ENCODE measurements at regions of chr7 and their contacts with region 1.

Region 1: GRCh38 chr7:102464577-102465280 is at the starts of genes ALKBH4 and LRWD1:
- DNase-seq: peak; percentile 98
- ATAC-seq: peak; percentile 94
- H3K4me3 Mint-ChIP-seq: peak within 1 kb of the TSS; percentile 95
- H3K27ac Mint-ChIP-seq: peak within 1 kb of the TSS; percentile 73
- H3K4me1 Mint-ChIP-seq: peaks cover 30% of the 10 kb centered on the region
- H3K27me3 Mint-ChIP-seq: no peaks in the 10 kb centered on the region
- total RNA-seq, gene ALKBH4: 6.1 to 9.1 TPM
- total RNA-seq, gene LRWD1: 13.6 to 14.4 TPM

Region 2: GRCh38 chr7:101321491-101322401 is 1143.0 kb before region 1 on chr7 and contains the start of gene IFT22:
- CTCF ChIA-PET with region 1: no interaction called
- POLR2A ChIA-PET with region 1: no interaction called
- intact Hi-C with region 1: loop called in 1 of 2 experiments (anchors 10 kb)
- DNase-seq: peak; percentile 93
- ATAC-seq: peak; percentile 97
- H3K4me3 Mint-ChIP-seq: peak within 1 kb of the TSS; percentile 82
- H3K27ac Mint-ChIP-seq: peak within 1 kb of the TSS; percentile 89
- H3K4me1 Mint-ChIP-seq: peaks cover 8% of the 10 kb centered on the region
- H3K27me3 Mint-ChIP-seq: no peaks in the 10 kb centered on the region
- total RNA-seq, gene IFT22: 6.0 to 6.7 TPM

Region 3: DNA sequence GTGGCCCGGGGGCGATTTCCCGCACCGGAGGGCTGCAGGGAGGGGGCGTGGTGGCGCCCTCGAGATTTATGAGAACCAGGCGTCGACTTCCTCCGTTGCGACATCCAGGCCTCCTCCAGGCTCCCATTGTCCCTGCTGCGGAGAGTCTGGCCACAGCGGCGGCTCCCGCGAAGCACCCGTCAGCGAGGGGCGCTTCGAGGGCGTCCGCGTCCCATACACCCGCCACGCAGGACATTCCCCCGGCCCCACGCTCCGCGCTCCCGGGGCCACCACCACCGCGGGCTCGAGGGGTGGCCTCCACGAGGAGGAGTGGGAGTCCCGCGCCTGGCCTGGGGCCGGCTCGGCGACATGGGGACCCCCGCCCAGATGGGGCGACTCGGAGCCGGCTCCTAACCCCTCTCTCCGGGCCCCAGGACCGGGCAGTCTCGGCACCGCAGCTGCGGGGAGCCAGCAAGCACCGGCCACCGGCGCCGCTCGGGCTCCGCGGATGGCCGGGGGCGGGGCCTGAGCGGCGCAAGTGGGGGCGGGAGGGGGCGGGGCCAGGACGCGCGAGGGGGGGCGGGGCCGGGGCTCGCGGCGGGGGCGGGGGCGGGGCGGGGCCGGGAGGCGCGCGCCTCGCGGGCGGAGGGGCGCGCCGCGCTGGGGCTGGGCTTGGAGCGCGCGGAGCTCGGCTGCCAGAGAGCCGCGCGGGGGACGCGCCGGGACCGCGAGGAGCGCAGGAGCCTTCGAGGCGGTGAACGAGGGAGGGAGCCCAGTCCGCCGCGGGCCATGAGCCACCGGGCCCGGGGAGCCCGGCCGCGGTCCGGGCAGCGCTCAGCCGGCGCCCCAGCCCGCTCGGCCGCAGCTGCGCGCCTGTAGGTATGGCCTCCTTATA is 178.3 kb before region 1 on chr7 and contains the start of gene SH2B2:
- CTCF ChIA-PET with region 1: no interaction called
- POLR2A ChIA-PET with region 1: no interaction called
- intact Hi-C with region 1: loop called (anchors 2 to 10 kb)
- DNase-seq: peak; percentile 63
- ATAC-seq: peak; percentile 34
- H3K4me3 Mint-ChIP-seq: peak within 1 kb of the TSS; percentile 56
- H3K27ac Mint-ChIP-seq: no peak within 1 kb of the TSS
- H3K4me1 Mint-ChIP-seq: peaks cover 34% of the 10 kb centered on the region
- H3K27me3 Mint-ChIP-seq: peaks cover 12% of the 10 kb centered on the region
- total RNA-seq, gene SH2B2: 2.7 to 3.2 TPM

Region 4: DNA sequence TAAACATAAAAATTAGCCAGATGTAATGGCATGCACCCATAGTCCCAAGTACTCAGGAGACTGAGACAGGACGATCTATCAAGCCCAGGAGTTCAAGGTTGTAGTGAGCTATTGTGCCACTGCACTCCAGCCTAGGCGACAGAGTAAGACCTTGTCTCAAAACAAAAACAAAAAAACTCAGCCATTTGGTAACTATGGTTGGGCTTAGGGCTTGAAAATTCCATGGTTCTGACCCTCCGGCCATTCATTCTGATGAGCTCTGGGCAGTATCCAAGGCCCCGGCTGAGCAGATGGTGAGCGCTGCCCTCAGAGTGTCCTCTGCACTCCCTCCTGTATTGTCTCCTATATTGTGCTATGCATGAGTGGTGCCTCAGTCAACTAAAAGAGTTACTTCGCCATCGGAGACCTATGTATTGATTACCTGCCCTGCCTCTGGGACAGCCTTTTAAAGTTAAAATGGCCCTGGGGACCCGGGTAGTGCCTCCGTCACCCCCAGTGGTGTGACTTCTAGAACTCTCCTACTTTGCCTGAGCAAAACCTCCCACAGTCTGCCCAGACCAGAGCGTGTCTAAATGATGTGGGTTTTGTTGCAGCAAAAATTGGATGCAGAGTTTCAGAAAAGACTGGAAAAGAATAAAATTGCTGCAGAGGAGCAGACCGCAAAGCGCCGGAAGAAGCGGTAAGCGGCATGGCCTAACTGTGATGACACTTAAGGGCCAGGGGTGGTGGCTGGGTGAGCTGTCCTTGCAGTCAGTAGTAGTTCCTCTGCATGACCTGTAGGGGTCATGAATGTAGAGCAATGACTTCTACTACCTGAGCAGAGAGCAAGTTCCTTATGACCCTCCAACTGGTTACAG is 60.5 kb before region 1 on chr7:
- CTCF ChIA-PET with region 1: interaction called, 5 read pairs
- POLR2A ChIA-PET with region 1: no interaction called
- intact Hi-C with region 1: loop called (anchors 2 kb)
- DNase-seq: peak; percentile 63
- ATAC-seq: peak; percentile 98
- H3K4me3 Mint-ChIP-seq: no peak overlapping the region
- H3K27ac Mint-ChIP-seq: peak overlapping the region; percentile 8
- H3K4me1 Mint-ChIP-seq: peaks cover 3% of the 10 kb centered on the region
- H3K27me3 Mint-ChIP-seq: no peaks in the 10 kb centered on the region

Region 5: DNA sequence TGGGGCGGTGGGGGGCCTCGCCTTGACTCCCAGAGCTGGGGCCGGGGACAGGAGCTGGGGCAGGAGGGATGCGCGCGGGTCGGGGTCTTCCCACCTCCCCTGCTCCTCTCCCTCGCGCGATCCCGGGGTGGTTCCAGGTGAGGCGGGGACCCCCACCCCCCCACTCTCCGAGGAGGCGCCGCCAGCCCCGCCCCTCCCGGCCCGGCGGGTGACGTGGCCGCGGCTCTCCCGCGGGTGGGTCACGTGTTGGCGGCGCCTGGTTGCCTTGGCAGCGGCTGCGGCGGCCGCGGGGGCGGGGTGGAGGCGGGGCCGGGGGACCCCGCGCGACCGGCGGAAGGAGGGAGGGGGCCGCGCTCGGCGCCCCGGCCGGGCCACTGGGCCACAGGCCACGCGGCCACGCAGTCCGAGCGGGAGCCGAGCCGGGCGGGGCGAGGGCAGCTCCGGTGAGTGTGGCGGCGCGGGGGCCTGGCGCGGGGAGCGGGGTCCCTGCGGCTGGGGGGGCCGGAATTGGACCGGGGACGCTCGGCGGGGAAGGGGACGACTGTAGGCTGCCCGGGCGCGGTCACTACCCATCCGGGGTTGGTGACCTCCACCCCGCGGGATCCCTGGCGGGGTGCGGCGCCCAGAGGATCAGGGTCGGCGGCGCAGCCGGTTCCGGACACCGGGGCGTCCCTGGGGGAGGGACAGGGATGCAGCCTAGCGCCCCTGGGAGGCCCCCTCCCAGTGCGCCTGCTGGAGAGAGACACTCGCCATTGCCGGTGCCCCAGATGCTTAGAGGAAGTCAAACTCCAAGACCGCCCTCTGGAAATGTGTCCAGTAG is 31.3 kb before region 1 on chr7 and contains the start of gene ORAI2:
- CTCF ChIA-PET with region 1: interaction called, 3 read pairs
- POLR2A ChIA-PET with region 1: interaction called, 4 read pairs
- intact Hi-C with region 1: loop called in 1 of 2 experiments (anchors 1 kb)
- DNase-seq: peak; percentile 92
- ATAC-seq: peak; percentile 63
- H3K4me3 Mint-ChIP-seq: peak within 1 kb of the TSS; percentile 78
- H3K27ac Mint-ChIP-seq: peak within 1 kb of the TSS; percentile 69
- H3K4me1 Mint-ChIP-seq: peaks cover 41% of the 10 kb centered on the region
- H3K27me3 Mint-ChIP-seq: no peaks in the 10 kb centered on the region
- total RNA-seq, gene ORAI2: 20.8 to 25.1 TPM

Region 6: GRCh38 chr7:102856036-102856435 is 391.3 kb after region 1 on chr7:
- CTCF ChIA-PET with region 1: no interaction called
- POLR2A ChIA-PET with region 1: no interaction called
- intact Hi-C with region 1: no loop called
- DNase-seq: no peak
- ATAC-seq: no peak
- H3K4me3 Mint-ChIP-seq: no peak overlapping the region
- H3K27ac Mint-ChIP-seq: no peak overlapping the region
- H3K4me1 Mint-ChIP-seq: no peaks in the 10 kb centered on the region
- H3K27me3 Mint-ChIP-seq: no peaks in the 10 kb centered on the region